K562 (cell line): ENCODE measurements at regions of chr16 and their contacts with region 1.

Region 1: DNA sequence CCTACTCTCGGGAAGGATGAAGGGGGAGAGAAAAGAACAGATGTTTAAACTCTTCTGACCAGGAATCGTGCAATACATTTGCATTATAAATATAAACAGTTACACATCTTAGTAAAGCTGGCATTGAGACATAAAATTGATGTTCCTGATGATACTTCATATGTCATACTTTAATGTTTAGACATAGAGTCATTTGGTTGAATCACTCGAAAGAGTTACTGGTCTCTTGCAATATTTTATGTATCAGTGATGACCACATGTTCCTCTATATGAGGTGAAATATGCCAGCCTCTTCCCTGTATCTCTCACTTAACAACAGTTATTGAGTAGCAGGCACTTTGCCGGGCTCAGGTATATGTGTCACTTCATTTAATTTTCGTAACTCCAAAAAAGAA is 49.7 kb upstream of the PMFBP1 start:
- DNase-seq: no peak
- ATAC-seq: no peak
- H3K4me3 ChIP-seq: no peak overlapping the region
- H3K27ac ChIP-seq: no peak overlapping the region
- H3K4me1 ChIP-seq: no peaks in the 10 kb centered on the region
- H3K27me3 ChIP-seq: peaks cover 0 to 10% of the 10 kb centered on the region in 2 experiments; a peak in 2 of 5 replicates
- CTCF ChIP-seq: no peak
- EP300 ChIP-seq: no peak
- POLR2A ChIP-seq: no peak
- RAD21 ChIP-seq: no peak

Region 2: GRCh38 chr16:72085002-72085401 is 136.6 kb before region 1 on chr16:
- CTCF ChIA-PET with region 1: no interaction called
- POLR2A ChIA-PET with region 1: no interaction called
- in situ Hi-C with region 1: no loop called
- intact Hi-C with region 1: no loop called
- DNase-seq: no peak
- ATAC-seq: no peak
- H3K4me3 ChIP-seq: no peak overlapping the region
- H3K27ac ChIP-seq: no peak overlapping the region
- H3K4me1 ChIP-seq: no peaks in the 10 kb centered on the region
- H3K27me3 ChIP-seq: no peaks in the 10 kb centered on the region
- CTCF ChIP-seq: no peak
- EP300 ChIP-seq: no peak
- POLR2A ChIP-seq: no peak
- RAD21 ChIP-seq: no peak

Region 3: DNA sequence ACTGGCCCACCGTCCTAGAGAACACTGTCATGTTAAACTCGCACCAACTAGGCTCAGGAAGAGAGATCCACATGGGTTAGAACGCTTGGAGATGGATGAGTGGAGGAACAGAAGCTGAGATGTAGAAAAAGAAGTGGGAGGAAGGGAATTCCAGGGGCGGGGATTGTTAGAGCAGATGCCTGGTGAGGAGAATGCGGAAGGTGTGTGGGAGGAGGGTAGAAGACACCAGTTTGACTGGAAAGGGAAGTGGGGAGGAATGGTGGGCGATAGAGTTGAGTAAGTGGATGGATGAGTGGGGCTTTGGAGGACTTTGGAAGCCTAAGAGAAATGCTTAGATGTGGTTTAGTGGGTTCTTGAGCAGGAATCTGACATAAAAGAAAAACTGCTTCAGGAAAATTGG is 90.6 kb before region 1 on chr16:
- CTCF ChIA-PET with region 1: no interaction called
- POLR2A ChIA-PET with region 1: no interaction called
- in situ Hi-C with region 1: no loop called
- intact Hi-C with region 1: loop called (anchors 10 kb)
- DNase-seq: no peak
- ATAC-seq: no peak
- H3K4me3 ChIP-seq: no peak overlapping the region
- H3K27ac ChIP-seq: no peak overlapping the region
- H3K4me1 ChIP-seq: peaks cover 0 to 6% of the 10 kb centered on the region in 2 experiments; a peak in 1 of 5 replicates
- H3K27me3 ChIP-seq: peaks cover 5 to 39% of the 10 kb centered on the region in 2 experiments; a peak in 3 of 5 replicates
- CTCF ChIP-seq: no peak
- EP300 ChIP-seq: no peak
- POLR2A ChIP-seq: no peak
- RAD21 ChIP-seq: no peak

Region 4: GRCh38 chr16:72189865-72190371 is 31.7 kb before region 1 on chr16:
- CTCF ChIA-PET with region 1: no interaction called
- POLR2A ChIA-PET with region 1: no interaction called
- in situ Hi-C with region 1: no loop called
- intact Hi-C with region 1: no loop called
- DNase-seq: peak in 1 of 4 experiments; percentile 11
- ATAC-seq: no peak
- H3K4me3 ChIP-seq: no peak overlapping the region
- H3K27ac ChIP-seq: no peak overlapping the region
- H3K4me1 ChIP-seq: no peaks in the 10 kb centered on the region
- H3K27me3 ChIP-seq: peaks cover 0 to 2% of the 10 kb centered on the region in 2 experiments; a peak in 1 of 5 replicates
- CTCF ChIP-seq: no peak
- EP300 ChIP-seq: no peak; the same call in 1 of the 2 replicates
- POLR2A ChIP-seq: no peak
- RAD21 ChIP-seq: no peak

Region 5: DNA sequence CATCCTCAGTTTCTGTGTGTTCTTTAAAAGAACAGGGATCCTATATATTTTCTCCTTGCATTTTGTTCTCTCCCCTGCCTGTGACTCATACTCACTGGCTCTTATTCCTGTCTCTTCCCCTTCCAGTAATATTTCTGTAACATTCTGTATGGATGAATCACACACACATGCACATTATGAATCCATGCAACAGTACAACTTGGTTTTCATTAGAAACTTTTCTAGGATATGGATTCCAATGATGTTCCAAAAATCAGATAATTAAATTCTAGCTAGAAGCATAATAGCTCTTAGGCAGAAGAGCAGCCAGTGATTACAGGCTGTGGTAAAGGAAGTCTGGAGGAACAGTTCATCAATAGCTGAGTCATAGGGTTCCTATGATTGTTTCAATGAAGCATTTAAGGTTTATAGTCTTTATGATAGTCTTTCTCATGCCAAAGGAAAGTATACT is 69.9 kb after region 1 on chr16:
- CTCF ChIA-PET with region 1: no interaction called
- POLR2A ChIA-PET with region 1: no interaction called
- in situ Hi-C with region 1: no loop called
- intact Hi-C with region 1: no loop called
- DNase-seq: no peak
- ATAC-seq: no peak
- H3K4me3 ChIP-seq: no peak overlapping the region
- H3K27ac ChIP-seq: no peak overlapping the region
- H3K4me1 ChIP-seq: no peaks in the 10 kb centered on the region
- H3K27me3 ChIP-seq: no peaks in the 10 kb centered on the region
- CTCF ChIP-seq: no peak
- EP300 ChIP-seq: no peak
- POLR2A ChIP-seq: no peak
- RAD21 ChIP-seq: no peak